Naive thymus-derived CD8-positive, alpha-beta T cell (primary cell): ENCODE measurements at regions of chr1 and their contacts with region 1.

Region 1: DNA sequence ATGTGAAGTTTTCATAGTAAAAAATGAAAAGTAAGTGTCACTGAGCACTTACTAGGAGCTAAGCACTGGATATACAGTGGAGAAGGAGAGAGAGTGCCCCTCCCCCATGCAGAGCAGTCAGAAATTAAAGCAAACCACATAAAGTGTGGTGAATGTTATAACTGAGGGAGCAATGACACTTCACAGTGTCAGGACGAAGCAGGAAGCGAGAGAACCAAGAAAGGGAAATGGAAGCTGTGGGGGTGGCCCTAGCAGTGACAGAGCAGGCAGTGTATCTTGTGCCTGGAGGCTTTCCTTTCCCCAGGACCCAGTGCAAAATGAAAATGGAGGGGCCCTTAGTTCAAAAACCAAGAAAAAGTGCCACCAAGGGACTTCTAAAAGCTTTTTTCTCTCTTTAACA is 21.5 kb upstream of the RCAN3 start:
- DNase-seq: peak in 8 of 10 donors; percentile 51 to 80 (median 62)
- ATAC-seq: peak; percentile 59 to 68
- H3K4me3 Mint-ChIP-seq: peak overlapping the region; percentile 60 to 89 (median 82)
- H3K27ac Mint-ChIP-seq: peak overlapping the region; percentile 87 to 100 (median 98)
- H3K4me1 Mint-ChIP-seq: peaks cover 23 to 79% (median 71%) of the 10 kb centered on the region in 4 donors
- H3K27me3 Mint-ChIP-seq: no peaks in the 10 kb centered on the region

Region 2: GRCh38 chr1:24468685-24469316 is 12.3 kb before region 1 on chr1:
- POLR2A ChIA-PET with region 1: interaction called, 10 read pairs
- DNase-seq: no peak
- ATAC-seq: no peak
- H3K4me3 Mint-ChIP-seq: no peak overlapping the region
- H3K27ac Mint-ChIP-seq: peak overlapping the region in 9 of 10 donors; percentile 33 to 78 (median 66)
- H3K4me1 Mint-ChIP-seq: peaks cover 20 to 57% (median 40%) of the 10 kb centered on the region in 4 donors
- H3K27me3 Mint-ChIP-seq: no peaks in the 10 kb centered on the region

Region 3: GRCh38 chr1:24491577-24492360 is 10.7 kb after region 1 on chr1:
- POLR2A ChIA-PET with region 1: interaction called, 930 read pairs
- DNase-seq: peak in 1 of 10 donors; percentile 29
- ATAC-seq: peak in 1 of 2 donors; percentile 69
- H3K4me3 Mint-ChIP-seq: no peak overlapping the region
- H3K27ac Mint-ChIP-seq: peak overlapping the region in 9 of 10 donors; percentile 9 to 74 (median 45)
- H3K4me1 Mint-ChIP-seq: peaks cover 18 to 50% (median 34%) of the 10 kb centered on the region in 4 donors
- H3K27me3 Mint-ChIP-seq: no peaks in the 10 kb centered on the region